ENCODE measurements at regions of chr13 and their contacts with region 1.

Region 1: DNA sequence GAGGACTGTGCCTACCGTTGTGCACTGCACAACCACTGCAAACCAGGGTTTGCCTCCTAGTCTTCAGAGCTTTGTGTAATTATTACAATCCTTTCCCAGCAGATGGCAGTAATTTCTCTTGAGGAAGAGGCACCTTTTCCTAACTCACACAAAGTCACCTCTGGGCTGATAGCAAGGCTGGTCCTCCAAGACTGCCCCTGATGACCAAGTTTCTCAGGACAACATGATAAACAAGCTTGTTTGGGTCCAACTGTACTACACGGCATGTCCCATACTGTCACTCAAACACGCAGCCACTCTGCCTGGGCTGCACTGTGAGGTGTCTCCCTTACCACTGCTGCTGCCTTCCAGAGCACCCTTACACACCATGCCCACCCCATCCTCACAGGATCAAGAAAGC is 39.3 kb downstream of the RFXAP start:
- DNase-seq: no peak
- H3K4me3 ChIP-seq: no peak overlapping the region
- H3K27ac ChIP-seq: no peak overlapping the region
- H3K4me1 ChIP-seq: peaks cover 0 to 6% (median 0%) of the 10 kb centered on the region in 4 donors
- H3K27me3 ChIP-seq: no peaks in the 10 kb centered on the region
- CTCF ChIP-seq: peak; percentile 44 to 55 (median 52)
- EP300 ChIP-seq: no peak
- POLR2A ChIP-seq: no peak

Region 2: DNA sequence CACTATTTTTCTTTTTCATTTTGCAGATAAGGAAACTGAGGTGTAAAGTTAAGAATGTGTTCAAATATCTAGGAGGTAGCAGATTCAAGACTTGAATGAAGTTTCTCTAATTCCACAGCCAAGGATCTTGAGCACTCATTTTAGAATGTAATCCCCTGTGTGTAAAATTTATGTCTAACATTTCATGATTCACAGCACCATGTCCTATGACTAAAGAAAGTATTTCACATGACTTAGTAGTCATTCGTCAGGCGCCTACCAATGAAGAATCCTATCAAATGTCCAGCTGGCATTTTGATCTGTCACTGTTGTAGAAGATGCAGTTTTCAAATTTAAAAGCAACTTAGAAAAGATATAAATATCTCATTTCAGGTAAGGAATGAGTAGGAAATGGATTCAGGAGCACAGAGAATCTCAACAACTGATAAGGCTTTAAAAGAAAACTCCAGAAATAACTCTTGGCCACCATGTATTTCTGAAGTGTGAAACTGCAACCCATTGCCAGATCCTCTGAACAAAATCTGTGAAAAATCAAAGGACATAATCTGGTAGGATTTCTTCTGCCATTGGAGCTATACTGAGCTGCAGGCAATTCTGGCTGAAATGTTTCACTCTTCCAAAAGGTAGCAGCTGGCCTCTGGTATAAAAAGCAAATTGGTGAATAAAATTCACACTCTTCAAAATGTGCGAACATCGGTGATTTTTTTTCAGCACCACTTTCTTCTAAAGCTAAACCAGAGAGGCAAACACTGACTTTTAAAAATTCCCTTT is 819.3 kb before region 1 on chr13:
- in situ Hi-C with region 1: no loop called
- intact Hi-C with region 1: no loop called
- DNase-seq: no peak
- H3K4me3 ChIP-seq: no peak overlapping the region
- H3K27ac ChIP-seq: no peak overlapping the region
- H3K4me1 ChIP-seq: no peaks in the 10 kb centered on the region
- H3K27me3 ChIP-seq: no peaks in the 10 kb centered on the region
- CTCF ChIP-seq: no peak
- EP300 ChIP-seq: no peak
- POLR2A ChIP-seq: no peak

Region 3: GRCh38 chr13:36965773-36966172 is 107.5 kb after region 1 on chr13:
- in situ Hi-C with region 1: loop called in 2 of 4 experiments (anchors 10 kb)
- intact Hi-C with region 1: no loop called
- DNase-seq: no peak
- H3K4me3 ChIP-seq: no peak overlapping the region
- H3K27ac ChIP-seq: no peak overlapping the region
- H3K4me1 ChIP-seq: no peaks in the 10 kb centered on the region
- H3K27me3 ChIP-seq: no peaks in the 10 kb centered on the region
- CTCF ChIP-seq: no peak
- EP300 ChIP-seq: no peak
- POLR2A ChIP-seq: no peak

Region 4: DNA sequence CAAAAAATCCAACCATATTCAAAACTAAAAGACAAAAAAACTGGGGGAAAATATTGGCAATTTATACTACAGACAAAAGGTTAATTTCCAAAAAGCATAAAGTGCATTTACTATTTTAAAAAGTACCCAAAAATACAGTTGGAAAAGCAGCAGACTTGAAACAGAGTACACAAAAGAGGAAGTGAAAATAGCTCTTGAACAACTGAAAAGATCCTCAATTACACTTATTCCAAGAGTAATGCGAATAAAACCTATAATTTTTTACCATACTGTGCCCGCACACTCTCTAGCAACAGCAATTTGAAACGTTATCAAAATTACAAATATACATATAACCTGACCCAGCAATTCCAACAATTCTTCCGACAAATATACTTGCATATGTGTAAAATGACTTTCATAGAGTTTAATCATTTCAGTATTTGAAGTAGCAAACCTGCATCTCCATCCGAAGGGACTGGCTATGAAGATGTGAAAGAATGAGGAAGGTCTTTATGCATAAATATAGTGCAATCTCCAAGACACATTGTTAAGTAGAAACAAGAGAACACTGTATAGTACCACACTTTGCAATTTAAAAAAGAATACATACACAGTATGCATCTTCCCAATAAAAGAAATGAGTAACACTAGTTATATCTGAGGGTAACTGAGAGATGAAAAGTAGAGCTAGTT is 115.5 kb after region 1 on chr13:
- in situ Hi-C with region 1: loop called in 3 of 4 experiments (anchors 10 to 25 kb)
- intact Hi-C with region 1: no loop called
- DNase-seq: no peak
- H3K4me3 ChIP-seq: no peak overlapping the region
- H3K27ac ChIP-seq: no peak overlapping the region
- H3K4me1 ChIP-seq: no peaks in the 10 kb centered on the region
- H3K27me3 ChIP-seq: no peaks in the 10 kb centered on the region
- CTCF ChIP-seq: no peak
- EP300 ChIP-seq: no peak
- POLR2A ChIP-seq: no peak

Region 5: DNA sequence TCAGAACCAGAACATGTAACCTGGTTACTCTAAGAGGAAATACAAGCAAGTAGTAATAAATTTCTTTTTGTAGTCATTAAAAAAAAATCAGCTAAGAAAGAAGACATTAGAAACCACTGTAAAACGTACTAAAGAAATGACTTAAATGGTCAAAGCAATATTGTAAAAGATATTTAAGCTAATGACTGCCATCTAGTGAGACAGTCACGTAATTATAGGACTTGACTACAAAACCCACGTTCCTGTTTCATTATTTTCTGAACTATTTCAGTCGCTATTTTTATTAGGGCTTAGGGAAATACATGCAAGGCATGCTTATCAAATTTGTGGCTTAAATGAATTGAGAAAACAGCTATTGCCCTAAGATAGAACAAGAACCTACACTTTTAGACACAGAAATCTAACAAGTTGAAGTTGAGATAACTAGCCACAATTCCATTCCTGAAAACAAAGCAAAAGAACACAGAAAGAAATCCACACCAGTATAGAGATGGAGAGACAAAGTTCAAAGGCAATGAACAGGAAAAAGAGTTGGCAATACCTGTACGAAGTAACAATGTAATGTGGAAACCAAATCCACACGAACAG is 123.0 kb after region 1 on chr13:
- in situ Hi-C with region 1: loop called in 3 of 4 experiments (anchors 5 to 25 kb)
- intact Hi-C with region 1: no loop called
- DNase-seq: no peak
- H3K4me3 ChIP-seq: no peak overlapping the region
- H3K27ac ChIP-seq: no peak overlapping the region
- H3K4me1 ChIP-seq: no peaks in the 10 kb centered on the region
- H3K27me3 ChIP-seq: no peaks in the 10 kb centered on the region
- CTCF ChIP-seq: peak; percentile 48 to 53 (median 51)
- EP300 ChIP-seq: no peak
- POLR2A ChIP-seq: no peak

Region 6: GRCh38 chr13:36999054-36999714 is 140.9 kb after region 1 on chr13 and contains the start of gene ALG5:
- in situ Hi-C with region 1: loop called in 1 of 4 experiments (anchors 25 kb)
- intact Hi-C with region 1: loop called (anchors 10 kb)
- DNase-seq: peak; percentile 93
- H3K4me3 ChIP-seq: peak within 1 kb of the TSS; percentile 91 to 92 (median 91)
- H3K27ac ChIP-seq: peak within 1 kb of the TSS; percentile 95 to 100 (median 96)
- H3K4me1 ChIP-seq: peaks cover 5 to 26% (median 19%) of the 10 kb centered on the region in 4 donors
- H3K27me3 ChIP-seq: no peaks in the 10 kb centered on the region
- CTCF ChIP-seq: peak; percentile 64 to 97 (median 92)
- EP300 ChIP-seq: no peak
- POLR2A ChIP-seq: peak; percentile 74
- total RNA-seq, gene ALG5: 3.8 to 33.8 (median 14.1) TPM

Region 7: DNA sequence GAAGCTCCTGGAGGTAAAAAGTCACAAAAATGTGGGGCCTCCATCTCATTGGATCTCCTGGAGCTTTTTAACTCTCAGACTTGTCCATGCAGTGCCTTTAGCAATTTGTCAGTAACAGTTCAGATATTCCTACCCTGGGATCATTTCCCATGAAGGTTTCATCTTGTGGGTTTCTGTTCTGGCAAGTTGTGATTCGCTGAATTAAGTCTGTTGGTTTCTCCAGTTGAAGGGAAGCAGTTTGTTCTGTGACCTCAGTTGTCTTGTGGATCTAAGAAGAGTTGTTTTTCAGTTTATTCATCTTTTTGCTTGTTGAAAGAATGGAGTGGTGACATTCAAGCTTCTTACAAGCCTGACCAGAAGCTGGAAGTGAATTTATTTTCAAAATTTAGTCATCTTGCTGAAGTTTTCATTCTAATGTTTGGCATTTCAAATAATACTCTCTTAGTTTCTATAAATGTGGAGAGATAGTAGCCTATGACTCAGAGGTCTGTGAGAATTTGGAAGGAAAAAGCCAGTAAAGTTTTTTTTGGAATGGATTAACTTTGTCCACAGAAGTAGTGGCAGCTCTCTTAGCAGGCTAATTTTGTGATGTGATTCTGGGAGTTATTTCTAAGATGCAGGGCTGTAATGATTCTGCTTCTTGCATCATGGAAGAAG is 367.3 kb after region 1 on chr13:
- in situ Hi-C with region 1: no loop called
- intact Hi-C with region 1: no loop called
- DNase-seq: no peak
- H3K4me3 ChIP-seq: no peak overlapping the region
- H3K27ac ChIP-seq: no peak overlapping the region
- H3K4me1 ChIP-seq: no peaks in the 10 kb centered on the region
- H3K27me3 ChIP-seq: no peaks in the 10 kb centered on the region
- CTCF ChIP-seq: no peak
- EP300 ChIP-seq: no peak
- POLR2A ChIP-seq: no peak